ENCODE measurements at regions of chr9 and their contacts with region 1.

Region 1: GRCh38 chr9:100589582-100589981 is 11.7 kb downstream of the CAVIN4 start:
- DNase-seq: no peak
- ATAC-seq: no peak
- H3K4me3 ChIP-seq: no peak overlapping the region
- H3K27ac ChIP-seq: no peak overlapping the region
- H3K4me1 ChIP-seq: no peaks in the 10 kb centered on the region
- H3K27me3 ChIP-seq: no peaks in the 10 kb centered on the region

Region 2: DNA sequence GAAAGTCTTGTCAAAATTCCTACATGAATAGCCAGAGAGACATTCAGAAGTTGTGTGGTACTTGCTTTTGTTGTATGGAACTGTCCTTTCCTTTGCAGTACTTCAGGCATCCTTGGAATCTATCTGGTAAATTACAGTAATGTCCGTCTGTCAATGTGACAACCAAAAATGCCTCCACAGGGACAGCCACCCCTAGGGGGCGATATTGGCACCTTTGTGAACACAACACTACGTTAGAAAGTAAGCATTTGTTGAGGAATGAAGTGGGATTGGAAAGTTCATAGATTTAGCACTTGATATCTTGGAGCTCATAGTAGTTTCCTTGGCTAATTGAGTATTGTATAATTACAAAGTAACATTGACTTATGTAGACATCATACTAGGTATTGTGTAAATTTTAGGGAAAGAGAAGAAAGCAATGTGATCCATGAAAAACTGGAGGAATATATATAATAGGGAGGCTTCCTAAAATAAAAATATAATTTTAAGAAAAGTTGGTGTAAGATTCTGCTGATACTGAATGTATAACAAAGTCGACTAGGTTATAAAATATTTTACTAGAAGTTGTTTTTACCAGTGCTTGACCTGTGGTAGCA is 83.9 kb before region 1 on chr9:
- intact Hi-C with region 1: loop called in 2 of 4 experiments (anchors 10 kb)
- DNase-seq: peak; percentile 59 to 86 (median 74)
- ATAC-seq: no peak
- H3K4me3 ChIP-seq: no peak overlapping the region
- H3K27ac ChIP-seq: no peak overlapping the region
- H3K4me1 ChIP-seq: no peaks in the 10 kb centered on the region
- H3K27me3 ChIP-seq: no peaks in the 10 kb centered on the region

Measured in right cardiac atrium (tissue), 5 donors.